Esophagus squamous epithelium (tissue), 5 donors: ENCODE measurements at regions of chr1 and their contacts with region 1.

Region 1: GRCh38 chr1:159161001-159161718 is 10.3 kb upstream of the CADM3 start:
- DNase-seq: no peak
- H3K4me3 ChIP-seq: peak overlapping the region in 1 of 4 donors; percentile 13
- H3K27ac ChIP-seq: peak overlapping the region in 3 of 4 donors; percentile 72 to 78 (median 75)
- H3K4me1 ChIP-seq: peaks cover 0 to 19% (median 6%) of the 10 kb centered on the region in 3 donors
- H3K27me3 ChIP-seq: peaks cover 0 to 55% (median 0%) of the 10 kb centered on the region in 4 donors
- CTCF ChIP-seq: peak; percentile 84 to 96 (median 93)
- POLR2A ChIP-seq: no peak

Region 2: DNA sequence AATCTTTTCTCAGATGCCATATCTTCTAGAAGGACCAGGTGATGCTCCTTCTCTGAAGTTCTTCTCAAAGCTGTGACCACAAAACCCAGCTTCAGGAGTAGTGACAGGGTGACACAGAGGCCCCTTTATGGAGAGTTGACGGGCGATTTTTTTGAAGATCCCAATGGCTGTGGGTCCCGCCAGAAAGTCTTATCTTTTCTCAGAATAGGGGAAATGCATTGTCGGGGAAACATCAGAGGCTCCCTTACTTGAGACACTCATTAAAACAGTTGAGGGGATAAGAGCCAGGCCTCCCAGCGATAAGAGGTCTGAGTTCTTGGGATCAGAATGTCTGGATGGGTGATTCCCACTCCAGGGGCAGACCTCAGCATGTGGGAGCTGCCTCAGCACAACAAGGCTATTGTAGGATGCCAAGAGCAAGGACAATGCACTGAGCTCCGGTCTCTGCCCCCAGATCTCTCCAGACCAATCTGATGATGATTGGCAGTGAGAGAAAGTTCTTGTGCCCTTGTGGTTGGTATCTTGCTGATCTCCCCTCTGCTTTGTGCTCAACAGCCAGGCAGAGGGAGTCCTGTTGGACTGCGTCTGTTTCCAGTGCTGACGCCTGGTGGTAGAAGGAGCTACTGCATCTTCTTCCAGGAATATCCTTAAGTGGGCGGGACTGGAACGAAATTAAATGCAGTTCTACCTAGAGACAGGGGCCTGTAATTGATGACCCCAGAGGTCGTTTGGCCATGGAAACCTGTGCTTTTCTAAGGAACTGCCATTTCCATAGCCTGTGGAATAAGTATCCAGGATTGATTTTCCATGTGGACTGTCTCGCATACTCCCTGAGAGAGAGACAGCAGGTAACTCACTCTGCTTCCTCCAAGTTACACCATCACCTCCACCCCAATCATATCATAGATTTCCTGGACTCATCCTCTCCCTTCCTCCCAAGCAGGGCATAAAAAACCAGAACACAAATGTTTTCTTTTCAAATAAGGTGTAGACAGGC is 36.7 kb after region 1 on chr1:
- intact Hi-C with region 1: loop called (anchors 5 kb)
- DNase-seq: no peak
- H3K4me3 ChIP-seq: peak overlapping the region in 2 of 4 donors; percentile 7 to 49
- H3K27ac ChIP-seq: no peak overlapping the region
- H3K4me1 ChIP-seq: no peaks in the 10 kb centered on the region
- H3K27me3 ChIP-seq: peaks cover 0 to 39% (median 0%) of the 10 kb centered on the region in 4 donors
- CTCF ChIP-seq: peak; percentile 80 to 89 (median 86)
- POLR2A ChIP-seq: no peak

Region 3: DNA sequence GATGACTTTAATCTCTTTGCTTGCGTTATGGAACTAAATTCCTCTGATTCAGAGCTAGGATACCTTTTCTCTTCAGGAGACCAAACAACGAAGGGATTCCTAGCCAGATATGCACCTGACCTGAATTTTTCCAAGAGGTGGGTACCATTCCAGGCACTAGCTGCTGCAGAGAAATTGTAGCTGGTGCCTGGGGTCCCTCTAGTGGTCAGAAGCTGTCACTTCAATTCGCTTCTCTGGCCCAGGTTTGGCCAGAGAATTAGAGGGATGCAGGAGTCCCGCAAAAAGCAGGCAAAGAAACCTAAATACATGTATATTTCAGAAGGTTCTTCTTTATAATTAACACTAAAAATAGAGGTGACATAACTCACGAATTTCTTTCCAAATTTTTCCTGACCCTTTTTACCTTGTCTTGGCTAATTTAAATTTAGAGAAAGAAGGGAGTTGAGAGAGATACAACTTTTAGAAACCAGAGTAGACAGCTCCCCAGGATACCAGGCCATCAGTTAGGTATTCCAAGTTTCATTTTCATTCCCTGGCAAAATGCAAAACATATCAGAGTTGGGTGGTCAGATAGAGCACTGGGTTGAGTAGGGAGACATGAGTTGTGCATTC is 53.1 kb after region 1 on chr1:
- intact Hi-C with region 1: loop called (anchors 5 kb)
- DNase-seq: no peak
- H3K4me3 ChIP-seq: no peak overlapping the region
- H3K27ac ChIP-seq: no peak overlapping the region
- H3K4me1 ChIP-seq: peaks cover 0 to 6% (median 0%) of the 10 kb centered on the region in 3 donors
- H3K27me3 ChIP-seq: peaks cover 0 to 65% (median 0%) of the 10 kb centered on the region in 4 donors
- CTCF ChIP-seq: peak; percentile 72 to 90 (median 78)
- POLR2A ChIP-seq: no peak